ENCODE measurements at regions of chr5 and their contacts with region 1.

Region 1: GRCh38 chr5:126519634-126520592 is 75.1 kb downstream of the ALDH7A1 start:
- DNase-seq: no peak
- ATAC-seq: no peak
- H3K4me3 Mint-ChIP-seq: no peak overlapping the region
- H3K27ac Mint-ChIP-seq: no peak overlapping the region
- H3K4me1 Mint-ChIP-seq: no peaks in the 10 kb centered on the region
- H3K27me3 Mint-ChIP-seq: no peaks in the 10 kb centered on the region

Region 2: DNA sequence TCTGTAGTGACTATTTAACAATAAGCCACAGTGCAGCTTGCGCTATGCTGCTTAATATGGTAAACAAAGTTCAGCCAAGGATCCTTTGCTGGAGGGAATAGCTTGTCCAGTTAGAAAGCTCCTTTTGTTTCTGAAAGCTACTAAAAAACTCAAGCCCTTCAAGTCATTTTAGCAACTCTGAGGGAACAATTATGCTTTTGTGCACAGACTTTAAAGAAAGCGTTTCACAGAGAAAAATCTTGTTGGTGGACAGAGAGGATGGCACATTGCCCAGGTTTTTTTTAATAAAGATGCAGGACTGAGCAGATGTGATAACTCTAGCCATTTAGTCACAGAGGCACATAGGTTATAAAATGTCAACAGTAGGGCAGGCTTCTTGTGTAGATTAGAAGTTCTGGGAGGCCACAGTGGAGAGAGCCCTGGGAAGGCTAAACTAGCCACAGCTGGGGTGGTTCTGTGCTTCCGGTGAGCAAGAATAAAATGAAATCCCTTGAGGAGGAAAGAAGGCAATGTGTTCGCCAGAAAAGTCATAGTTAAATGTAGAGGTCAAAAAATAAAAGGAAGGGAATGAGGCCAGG is 11.7 kb after region 1 on chr5:
- CTCF ChIA-PET with region 1: interaction called, 10 read pairs
- POLR2A ChIA-PET with region 1: interaction called, 4 read pairs
- intact Hi-C with region 1: no loop called
- DNase-seq: no peak
- ATAC-seq: no peak
- H3K4me3 Mint-ChIP-seq: no peak overlapping the region
- H3K27ac Mint-ChIP-seq: no peak overlapping the region
- H3K4me1 Mint-ChIP-seq: no peaks in the 10 kb centered on the region
- H3K27me3 Mint-ChIP-seq: peaks cover under 1% of the 10 kb centered on the region

Measured in activated CD4-positive, alpha-beta T cell treated with anti-CD3 and anti-CD28 coated beads for 36 hours (primary cell).